Posterior vena cava (tissue), 2 donors: ENCODE measurements at regions of chr3 and their contacts with region 1.

Region 1: GRCh38 chr3:59212128-59212779 is 162.4 kb upstream of the CFAP20DC start:
- DNase-seq: no peak

Region 2: GRCh38 chr3:59249004-59249403 is 36.8 kb after region 1 on chr3:
- intact Hi-C with region 1: loop called in 1 of 2 experiments (anchors 1 kb)
- DNase-seq: no peak